PC-3 (cell line): ENCODE measurements at regions of chr3 and their contacts with region 1.

Region 1: DNA sequence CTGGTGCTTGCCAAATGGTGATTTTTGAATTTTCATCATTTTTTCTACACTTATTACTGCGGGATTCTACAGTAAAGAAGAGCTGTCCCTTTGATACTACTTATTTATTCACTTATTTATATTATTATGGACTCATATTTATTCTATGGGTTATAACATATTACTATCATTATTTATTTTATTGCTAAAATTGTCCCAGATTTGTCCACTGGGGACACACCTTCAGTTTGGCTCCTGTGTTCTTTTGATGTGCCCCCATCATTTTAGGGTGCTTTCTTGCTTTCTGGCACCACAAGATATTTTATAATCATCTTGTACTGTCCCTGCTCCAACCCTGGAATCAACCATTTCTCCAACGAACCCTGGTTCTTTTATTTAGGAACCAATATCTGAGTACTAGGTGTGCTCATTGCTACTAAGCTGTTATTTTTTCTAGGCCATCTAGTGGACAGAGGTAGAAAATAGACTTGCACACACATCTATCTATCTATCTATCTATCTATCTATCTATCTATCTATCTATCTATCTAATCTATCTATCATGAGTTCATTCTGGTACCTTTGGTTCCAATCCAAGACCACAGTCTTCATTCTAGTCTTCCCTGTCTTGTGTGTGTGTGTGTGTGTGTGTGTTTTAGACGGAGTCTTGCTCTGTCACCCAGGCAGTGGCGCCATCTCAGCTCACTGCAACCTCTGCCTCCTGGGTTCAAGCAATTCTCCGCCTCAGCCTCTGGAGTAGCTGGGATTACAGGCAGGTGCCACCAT is 16.0 kb downstream of the SLC22A14 start:
- DNase-seq: peak; percentile 50
- ATAC-seq: peak; percentile 92
- H3K4me3 ChIP-seq: no peak overlapping the region
- H3K27ac ChIP-seq: no peak overlapping the region
- H3K4me1 ChIP-seq: no peaks in the 10 kb centered on the region
- H3K27me3 ChIP-seq: no peaks in the 10 kb centered on the region
- CTCF ChIP-seq: peak; percentile 82

Region 2: DNA sequence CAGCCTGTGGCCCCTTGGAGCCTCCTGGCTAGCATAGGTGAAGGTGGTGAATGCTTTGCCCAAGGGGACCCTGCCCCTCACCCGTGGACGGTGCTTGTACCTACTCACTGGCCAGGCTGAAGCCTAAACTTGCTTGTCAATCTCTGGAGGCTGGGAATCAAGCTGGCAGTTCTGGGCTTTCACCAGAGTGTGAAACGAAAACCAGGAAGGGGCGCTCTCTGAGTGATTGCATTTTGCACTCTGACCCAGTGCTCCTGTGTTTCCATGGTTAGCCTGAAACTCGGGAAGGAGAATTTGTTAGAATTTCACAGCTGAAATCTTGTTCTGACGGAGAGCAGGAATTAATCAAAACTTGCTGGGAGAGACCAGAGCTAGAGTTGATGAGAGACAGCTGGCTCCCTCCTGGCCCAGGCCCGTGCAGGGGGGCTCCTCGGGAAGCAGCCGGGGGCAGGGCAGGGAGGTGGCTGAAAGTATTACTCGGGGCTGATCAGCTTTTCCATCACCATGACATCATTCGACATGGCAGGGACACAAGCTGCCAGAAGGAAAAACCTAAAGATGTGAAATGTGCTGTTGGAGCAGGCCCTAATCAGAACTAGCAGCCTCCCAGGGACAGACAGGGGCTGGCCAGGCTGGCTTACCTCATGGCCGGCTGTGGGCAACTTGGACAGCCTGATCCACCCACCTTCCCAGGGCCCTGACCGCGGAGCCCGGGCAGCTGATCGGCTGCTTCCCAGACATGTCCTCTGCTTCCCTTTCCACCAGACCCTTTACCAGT is 760.0 kb before region 1 on chr3:
- CTCF ChIA-PET with region 1: no interaction called
- POLR2A ChIA-PET with region 1: no interaction called
- intact Hi-C with region 1: no loop called
- DNase-seq: no peak
- ATAC-seq: no peak
- H3K4me3 ChIP-seq: no peak overlapping the region
- H3K27ac ChIP-seq: no peak overlapping the region
- H3K4me1 ChIP-seq: peaks cover 2% of the 10 kb centered on the region; the same call in 1 of the 2 replicates
- H3K27me3 ChIP-seq: peaks cover 84% of the 10 kb centered on the region
- CTCF ChIP-seq: no peak

Region 3: GRCh38 chr3:37974121-37975083 is 323.7 kb before region 1 on chr3:
- CTCF ChIA-PET with region 1: interaction called, 4 read pairs
- POLR2A ChIA-PET with region 1: no interaction called
- intact Hi-C with region 1: loop called (anchors 5 kb)
- DNase-seq: peak; percentile 74
- ATAC-seq: peak; percentile 99
- H3K4me3 ChIP-seq: no peak overlapping the region
- H3K27ac ChIP-seq: no peak overlapping the region
- H3K4me1 ChIP-seq: no peaks in the 10 kb centered on the region
- H3K27me3 ChIP-seq: no peaks in the 10 kb centered on the region
- CTCF ChIP-seq: peak; percentile 98

Region 4: GRCh38 chr3:38117748-38118420 is 180.2 kb before region 1 on chr3:
- CTCF ChIA-PET with region 1: no interaction called
- POLR2A ChIA-PET with region 1: no interaction called
- intact Hi-C with region 1: loop called (anchors 1 kb)
- DNase-seq: peak; percentile 74
- ATAC-seq: peak; percentile 64
- H3K4me3 ChIP-seq: no peak overlapping the region
- H3K27ac ChIP-seq: no peak overlapping the region
- H3K4me1 ChIP-seq: peaks cover 6% of the 10 kb centered on the region; the same call in 1 of the 2 replicates
- H3K27me3 ChIP-seq: no peaks in the 10 kb centered on the region
- CTCF ChIP-seq: peak; percentile 87